Stomach (tissue), 19 donors: ENCODE measurements at regions of chr2 and their contacts with region 1.

Region 1: GRCh38 chr2:20225294-20226151 is 593 bp upstream of the SDC1 start:
- DNase-seq: peak; percentile 80 to 94
- H3K4me3 ChIP-seq: peak overlapping the region; percentile 65 to 82 (median 70)
- H3K27ac ChIP-seq: peak overlapping the region; percentile 88 to 95 (median 91)
- H3K4me1 ChIP-seq: peaks cover 26 to 54% (median 45%) of the 10 kb centered on the region in 4 donors
- H3K27me3 ChIP-seq: peaks cover 0 to 48% (median 0%) of the 10 kb centered on the region in 3 donors
- CTCF ChIP-seq: peak in 4 of 7 experiments; percentile 36 to 69 (median 60)
- EP300 ChIP-seq: no peak
- POLR2A ChIP-seq: no peak

Region 2: DNA sequence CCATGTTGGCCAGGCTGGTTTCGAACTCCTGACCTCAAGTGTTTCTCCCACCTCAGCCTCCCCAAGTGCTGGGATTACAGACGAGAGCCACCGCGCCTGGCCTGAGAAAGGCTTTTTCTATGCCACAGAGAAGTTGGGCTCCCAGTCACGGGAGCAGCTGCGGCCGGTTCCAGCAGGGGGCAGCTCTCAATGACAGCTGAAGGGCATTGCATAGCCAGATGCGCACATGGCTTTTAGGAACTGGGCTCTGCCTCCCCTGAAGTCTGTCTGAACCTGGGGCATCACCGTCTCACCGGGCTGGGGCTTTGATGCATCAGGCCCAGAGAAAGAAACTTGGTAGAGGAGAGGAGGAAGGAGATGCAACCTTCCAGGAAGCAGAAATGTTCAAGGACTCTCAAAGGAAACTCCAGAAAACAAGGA is 89.9 kb before region 1 on chr2:
- intact Hi-C with region 1: loop called (anchors 10 kb)
- DNase-seq: peak; percentile 85 to 90
- H3K4me3 ChIP-seq: no peak overlapping the region
- H3K27ac ChIP-seq: no peak overlapping the region
- H3K4me1 ChIP-seq: peaks cover 0 to 8% (median 3%) of the 10 kb centered on the region in 4 donors
- H3K27me3 ChIP-seq: no peaks in the 10 kb centered on the region
- CTCF ChIP-seq: peak in 5 of 7 experiments; percentile 59 to 87 (median 70)
- EP300 ChIP-seq: no peak
- POLR2A ChIP-seq: no peak